MCF 10A (cell line): ENCODE measurements at regions of chr13 and their contacts with region 1.

Region 1: GRCh38 chr13:49110122-49110912 is 109.8 kb upstream of the MLNR start:
- DNase-seq: peak; percentile 93
- H3K4me3 Mint-ChIP-seq: peak overlapping the region; percentile 79
- H3K27ac Mint-ChIP-seq: peak overlapping the region; percentile 70
- H3K4me1 Mint-ChIP-seq: peaks cover 17% of the 10 kb centered on the region
- H3K27me3 Mint-ChIP-seq: no peaks in the 10 kb centered on the region
- CTCF ChIP-seq: no peak

Region 2: GRCh38 chr13:49023446-49023845 is 86.9 kb before region 1 on chr13:
- CTCF ChIA-PET with region 1: no interaction called
- POLR2A ChIA-PET with region 1: interaction called, 24 read pairs
- intact Hi-C with region 1: no loop called
- DNase-seq: peak; percentile 58
- H3K4me3 Mint-ChIP-seq: no peak overlapping the region
- H3K27ac Mint-ChIP-seq: peak overlapping the region; percentile 63
- H3K4me1 Mint-ChIP-seq: peaks cover 31% of the 10 kb centered on the region
- H3K27me3 Mint-ChIP-seq: no peaks in the 10 kb centered on the region
- CTCF ChIP-seq: no peak

Region 3: DNA sequence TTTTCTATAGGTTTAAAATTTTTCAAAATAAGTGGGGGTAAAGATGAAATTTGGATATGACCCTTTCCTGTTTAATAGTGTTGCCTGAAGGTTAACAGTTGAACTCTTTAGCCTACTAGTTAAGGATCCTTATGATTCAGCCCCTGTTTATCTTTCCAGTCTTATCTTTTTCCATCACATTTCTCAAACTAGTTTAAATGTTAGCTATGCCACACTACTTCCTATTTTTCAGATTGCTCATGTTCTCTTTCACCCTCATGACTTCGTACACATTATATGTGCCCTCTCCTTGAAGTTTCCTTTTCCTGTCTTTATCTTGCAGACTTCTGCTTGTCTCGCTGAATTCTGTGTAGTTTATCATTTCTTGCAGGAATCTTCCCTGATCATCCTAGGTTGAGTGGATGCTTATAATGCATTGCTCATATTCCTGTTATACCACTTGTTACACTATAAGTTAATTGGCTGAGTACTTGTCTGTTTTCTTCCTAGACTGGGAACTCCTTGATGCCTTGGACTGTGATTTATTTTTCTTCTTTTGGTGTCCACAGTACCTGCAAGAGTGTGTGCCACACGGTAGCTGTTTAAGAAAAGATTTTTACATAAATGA is 47.9 kb before region 1 on chr13:
- CTCF ChIA-PET with region 1: no interaction called
- POLR2A ChIA-PET with region 1: interaction called, 30 read pairs
- intact Hi-C with region 1: no loop called
- DNase-seq: no peak
- H3K4me3 Mint-ChIP-seq: no peak overlapping the region
- H3K27ac Mint-ChIP-seq: peak overlapping the region; percentile 55
- H3K4me1 Mint-ChIP-seq: peaks cover 32% of the 10 kb centered on the region
- H3K27me3 Mint-ChIP-seq: no peaks in the 10 kb centered on the region
- CTCF ChIP-seq: no peak

Region 4: GRCh38 chr13:49082653-49083536 is 27.4 kb before region 1 on chr13:
- CTCF ChIA-PET with region 1: interaction called, 5 read pairs
- POLR2A ChIA-PET with region 1: interaction called, 20 read pairs
- intact Hi-C with region 1: no loop called
- DNase-seq: peak; percentile 84
- H3K4me3 Mint-ChIP-seq: peak overlapping the region; percentile 13
- H3K27ac Mint-ChIP-seq: peak overlapping the region; percentile 72
- H3K4me1 Mint-ChIP-seq: peaks cover 26% of the 10 kb centered on the region
- H3K27me3 Mint-ChIP-seq: no peaks in the 10 kb centered on the region
- CTCF ChIP-seq: no peak

Region 5: DNA sequence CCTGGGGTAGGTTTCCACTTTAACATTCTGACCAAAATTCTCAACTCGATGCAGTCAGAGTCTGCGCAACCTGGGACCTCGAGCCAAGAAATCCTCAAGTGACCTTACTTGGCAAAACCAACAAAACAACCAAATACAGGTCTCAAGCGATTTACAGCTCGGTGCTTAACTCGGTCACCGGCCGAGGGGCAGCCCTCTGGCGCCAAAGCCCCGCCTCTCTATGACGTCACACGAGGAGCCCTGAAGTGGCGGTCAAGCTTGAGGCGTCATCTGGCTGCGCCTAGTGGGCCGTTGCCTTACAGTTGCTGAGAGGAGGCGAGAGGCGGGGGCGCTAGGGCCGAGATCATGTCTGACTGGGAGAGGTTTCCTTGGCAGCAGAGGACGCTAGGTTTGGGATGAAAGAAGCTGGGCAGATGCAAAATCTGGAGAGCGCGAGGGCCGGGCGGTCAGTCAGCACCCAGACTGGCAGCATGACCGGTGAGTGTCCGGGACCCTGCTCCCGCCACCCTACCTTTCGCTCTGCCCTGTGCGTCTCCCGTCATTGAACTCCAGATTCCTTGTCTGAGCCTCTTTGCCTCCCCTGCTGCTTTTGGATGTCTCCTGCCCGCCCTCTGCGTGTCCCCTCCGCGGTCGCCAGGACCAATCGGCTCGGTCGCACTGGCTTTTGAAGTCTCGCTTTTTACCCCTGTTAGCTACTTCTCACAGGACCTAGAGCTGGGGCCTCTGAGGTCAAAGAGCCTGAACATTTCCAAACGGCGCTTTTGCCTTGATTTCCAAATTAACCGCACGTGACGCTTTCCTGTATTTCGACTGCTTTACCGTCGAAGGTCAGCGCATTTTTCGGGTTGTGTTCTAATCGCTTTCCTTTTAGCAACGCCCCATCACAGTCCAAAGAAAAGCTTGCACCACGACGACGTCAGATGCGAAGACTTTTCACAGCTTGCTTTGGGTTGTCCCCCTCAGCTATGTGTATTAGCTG is 137.6 kb after region 1 on chr13 and contains the start of gene CDADC1:
- CTCF ChIA-PET with region 1: interaction called, 3 read pairs
- POLR2A ChIA-PET with region 1: interaction called, 28 read pairs
- intact Hi-C with region 1: no loop called
- DNase-seq: peak; percentile 95
- H3K4me3 Mint-ChIP-seq: peak within 1 kb of the TSS; percentile 96
- H3K27ac Mint-ChIP-seq: peak within 1 kb of the TSS; percentile 97
- H3K4me1 Mint-ChIP-seq: peaks cover 6% of the 10 kb centered on the region
- H3K27me3 Mint-ChIP-seq: no peaks in the 10 kb centered on the region
- CTCF ChIP-seq: no peak
- total RNA-seq, gene CDADC1: 8.0 and 9.4 TPM in 2 replicates

Region 6: GRCh38 chr13:49530457-49530856 is 420.1 kb after region 1 on chr13:
- CTCF ChIA-PET with region 1: no interaction called
- POLR2A ChIA-PET with region 1: no interaction called
- intact Hi-C with region 1: no loop called
- DNase-seq: no peak
- H3K4me3 Mint-ChIP-seq: no peak overlapping the region
- H3K27ac Mint-ChIP-seq: no peak overlapping the region
- H3K4me1 Mint-ChIP-seq: no peaks in the 10 kb centered on the region
- H3K27me3 Mint-ChIP-seq: no peaks in the 10 kb centered on the region
- CTCF ChIP-seq: no peak